Posterior vena cava (tissue), 2 donors: ENCODE measurements at regions of chr22 and their contacts with region 1.

Region 1: DNA sequence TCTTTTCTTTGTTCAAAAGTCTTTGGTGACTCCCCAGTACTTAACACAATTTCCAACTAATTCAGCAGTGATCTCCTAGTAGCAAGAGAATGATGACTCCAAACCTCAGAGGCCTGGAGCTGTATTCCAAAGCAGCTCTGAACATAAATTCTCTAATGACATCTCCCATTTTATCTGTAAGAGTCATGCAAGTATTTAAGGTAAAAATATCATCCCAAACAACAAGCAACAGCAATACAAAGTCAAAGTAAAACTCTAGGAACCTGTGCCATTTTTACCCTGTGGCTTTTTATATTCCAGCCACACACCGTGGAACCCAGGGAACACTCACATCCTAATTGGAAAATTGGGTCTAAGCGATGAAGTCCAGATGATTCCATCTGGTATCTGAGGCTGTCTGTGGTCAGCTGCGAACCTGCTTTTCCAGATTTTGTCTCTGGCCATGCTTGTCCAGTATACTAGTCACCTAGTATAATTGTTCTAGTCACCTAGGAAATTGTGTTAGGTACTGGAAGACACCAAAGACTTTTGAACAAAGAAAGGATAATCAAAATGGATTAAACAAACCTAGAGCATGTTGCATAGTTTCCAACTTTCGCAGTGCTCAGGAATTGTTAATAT is 92.3 kb upstream of the SLC25A18 start:
- DNase-seq: no peak

Region 2: GRCh38 chr22:17483688-17484381 is 12.8 kb after region 1 on chr22:
- intact Hi-C with region 1: loop called in 1 of 2 experiments (anchors 1 kb)
- DNase-seq: no peak